ENCODE measurements at regions of chr19 and their contacts with region 1.

Region 1: DNA sequence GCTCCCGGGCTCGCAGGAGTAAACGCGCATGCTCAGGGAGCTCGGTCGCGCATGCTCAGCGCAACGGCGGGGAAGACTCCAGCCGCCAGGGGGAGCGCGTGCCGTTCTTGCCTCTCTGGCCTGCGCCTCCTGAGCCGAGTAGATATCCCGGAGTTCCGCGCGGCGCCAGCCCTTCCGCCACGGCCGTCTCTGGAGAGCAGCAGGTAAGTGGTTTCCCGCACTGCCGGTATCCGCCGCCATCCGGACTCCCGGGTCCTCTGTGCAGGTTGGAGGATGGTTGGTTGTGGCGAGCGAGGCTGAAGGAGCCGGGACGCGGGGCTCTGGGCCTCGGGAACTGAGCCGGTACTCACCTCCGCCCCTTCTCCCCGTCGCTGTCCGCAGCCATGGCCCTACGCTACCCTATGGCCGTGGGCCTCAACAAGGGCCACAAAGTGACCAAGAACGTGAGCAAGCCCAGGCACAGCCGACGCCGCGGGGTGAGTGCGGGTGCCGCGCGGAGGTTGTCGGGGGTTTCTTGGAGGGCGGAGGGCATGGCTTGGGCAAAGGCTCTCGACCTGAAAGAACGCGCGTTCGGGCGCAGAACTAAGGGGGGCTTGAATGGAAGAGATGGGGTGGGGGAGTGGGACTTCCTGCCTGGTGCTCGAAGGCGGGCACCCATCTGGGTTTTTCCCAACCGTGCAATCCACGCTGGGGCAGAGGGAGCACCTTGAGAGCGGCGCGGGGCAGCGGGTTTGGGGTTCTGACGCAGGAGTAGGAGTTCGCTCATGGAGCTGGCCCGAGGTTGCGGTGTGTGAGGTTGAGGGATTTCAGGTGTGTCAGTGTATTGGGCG is at the start of gene RPL36:
- DNase-seq: peak; percentile 83
- H3K4me3 ChIP-seq: peak within 1 kb of the TSS; percentile 82 to 94 (median 86)
- H3K27ac ChIP-seq: peak within 1 kb of the TSS; percentile 93 to 97 (median 94)
- H3K4me1 ChIP-seq: peaks cover 21 to 69% (median 28%) of the 10 kb centered on the region in 3 donors
- H3K27me3 ChIP-seq: no peaks in the 10 kb centered on the region
- CTCF ChIP-seq: peak; percentile 88 to 100 (median 99)
- POLR2A ChIP-seq: peak in 3 of 4 donors; percentile 45 to 92 (median 86)
- total RNA-seq, gene RPL36: 572 to 1,565 (median 1,059) TPM

Region 2: GRCh38 chr19:5430237-5430636 is 260.1 kb before region 1 on chr19:
- intact Hi-C with region 1: no loop called
- DNase-seq: no peak
- H3K4me3 ChIP-seq: no peak overlapping the region
- H3K27ac ChIP-seq: no peak overlapping the region
- H3K4me1 ChIP-seq: no peaks in the 10 kb centered on the region
- H3K27me3 ChIP-seq: peaks cover 0 to 35% (median 0%) of the 10 kb centered on the region in 4 donors
- CTCF ChIP-seq: no peak
- POLR2A ChIP-seq: no peak

Region 3: GRCh38 chr19:5622463-5623396 is 67.6 kb before region 1 on chr19 and contains the starts of genes SAFB and SAFB2:
- intact Hi-C with region 1: loop called (anchors 10 kb)
- DNase-seq: peak; percentile 95
- H3K4me3 ChIP-seq: peak within 1 kb of the TSS; percentile 78 to 100 (median 90)
- H3K27ac ChIP-seq: peak within 1 kb of the TSS; percentile 95 to 99 (median 96)
- H3K4me1 ChIP-seq: peaks cover 48 to 79% (median 55%) of the 10 kb centered on the region in 3 donors
- H3K27me3 ChIP-seq: no peaks in the 10 kb centered on the region
- CTCF ChIP-seq: peak in 1 of 6 experiments; percentile 18
- POLR2A ChIP-seq: peak in 3 of 4 donors; percentile 78 to 98 (median 79)
- total RNA-seq, gene SAFB: 40.5 to 80.1 (median 59.2) TPM
- total RNA-seq, gene SAFB2: 11.6 to 47.3 (median 32.1) TPM

Region 4: DNA sequence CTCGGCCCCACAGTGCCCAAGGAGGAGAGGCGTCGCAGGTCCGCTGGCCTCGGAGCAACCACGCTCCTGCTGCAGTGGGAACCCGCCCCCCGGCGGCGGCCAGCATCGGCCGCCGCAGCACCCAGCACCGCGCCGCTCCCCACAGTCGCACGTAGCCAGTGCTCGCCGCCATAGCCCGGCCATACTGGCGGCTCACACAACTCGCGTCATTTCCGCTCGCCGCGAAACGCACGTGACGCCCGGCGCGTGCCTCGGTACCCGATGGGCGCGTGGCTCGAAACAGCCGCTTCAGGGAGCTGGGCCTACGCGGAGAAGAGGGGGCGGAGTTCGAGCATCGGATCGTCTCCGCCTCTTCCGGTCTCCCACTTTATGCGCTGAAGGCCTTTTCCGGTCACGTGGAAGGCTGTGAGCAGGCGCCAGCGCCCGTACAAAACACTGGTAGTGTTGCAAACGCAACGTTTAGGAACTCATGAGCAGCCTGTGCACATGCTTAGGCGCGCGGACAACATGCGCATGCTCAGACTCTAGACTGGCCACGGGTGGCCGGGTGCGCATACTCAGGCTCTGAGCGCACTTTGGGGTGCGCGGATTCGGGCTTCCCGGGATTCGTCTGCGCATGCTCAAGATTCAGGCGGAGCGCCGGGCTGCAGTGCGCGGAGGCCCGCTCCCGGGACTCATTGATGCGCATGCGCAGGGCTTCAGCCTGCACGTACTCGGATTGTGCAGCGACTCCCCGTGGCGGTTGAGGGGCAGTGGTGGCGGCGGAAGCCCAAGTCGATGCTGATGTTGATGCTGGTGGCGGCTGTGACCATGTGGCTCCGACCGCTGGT is 29.8 kb after region 1 on chr19 and contains the starts of genes CATSPERD and LONP1:
- intact Hi-C with region 1: loop called (anchors 2 kb)
- DNase-seq: peak; percentile 93
- H3K4me3 ChIP-seq: peak within 1 kb of the TSS; percentile 85 to 97 (median 92)
- H3K27ac ChIP-seq: peak within 1 kb of the TSS; percentile 91 to 95 (median 93)
- H3K4me1 ChIP-seq: peaks cover 16 to 45% (median 16%) of the 10 kb centered on the region in 3 donors
- H3K27me3 ChIP-seq: no peaks in the 10 kb centered on the region
- CTCF ChIP-seq: peak; percentile 91 to 98 (median 96)
- POLR2A ChIP-seq: peak in 3 of 4 donors; percentile 28 to 76 (median 73)
- total RNA-seq, gene CATSPERD: 0.19 TPM in 1 of 4 donors, not detected in the others
- total RNA-seq, gene LONP1: 38.0 to 68.5 (median 51.2) TPM